Astrocyte of the cerebellum (primary cell): ENCODE measurements at regions of chr1 and their contacts with region 1.

Region 1: DNA sequence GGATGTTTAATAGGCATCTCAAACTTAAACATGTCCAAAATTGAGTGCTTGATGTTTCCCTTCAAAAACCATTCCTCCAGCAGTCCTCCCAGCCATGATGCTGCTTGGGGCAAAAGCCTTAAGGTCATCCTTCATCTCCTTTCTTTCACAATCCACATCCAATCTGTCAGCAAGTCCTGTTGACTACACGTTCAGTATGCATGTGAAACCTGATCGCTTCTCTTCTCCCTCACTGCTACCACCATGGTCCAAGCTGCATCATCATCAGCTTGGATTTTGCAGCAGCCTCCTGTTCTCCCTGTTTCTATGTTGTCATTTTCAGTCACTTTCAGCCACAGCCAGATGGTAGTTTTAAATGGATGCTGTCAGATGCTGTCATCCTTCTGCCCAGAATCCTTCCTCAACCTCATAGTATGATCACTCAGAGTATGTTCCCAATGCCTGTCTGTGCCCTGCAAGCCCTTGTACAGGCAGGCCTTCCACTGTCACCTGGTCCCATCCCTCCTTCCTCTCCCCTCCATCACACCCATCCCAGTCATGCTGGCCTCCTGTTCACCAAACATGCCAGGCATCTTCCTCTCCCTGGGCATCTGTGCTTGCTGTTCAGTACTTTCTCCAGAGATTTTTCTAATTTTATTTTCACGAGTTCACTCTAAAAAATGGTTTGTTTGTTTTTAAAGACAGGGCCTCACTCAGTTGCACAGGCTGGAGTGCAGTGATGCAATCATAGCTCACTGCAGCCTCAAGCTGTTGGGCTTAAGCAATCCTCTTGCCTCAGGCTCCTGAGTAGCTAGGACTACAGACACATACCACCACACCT is 66.0 kb downstream of the SYDE2 start:
- DNase-seq: no peak
- H3K4me3 ChIP-seq: no peak overlapping the region
- CTCF ChIP-seq: no peak

Region 2: DNA sequence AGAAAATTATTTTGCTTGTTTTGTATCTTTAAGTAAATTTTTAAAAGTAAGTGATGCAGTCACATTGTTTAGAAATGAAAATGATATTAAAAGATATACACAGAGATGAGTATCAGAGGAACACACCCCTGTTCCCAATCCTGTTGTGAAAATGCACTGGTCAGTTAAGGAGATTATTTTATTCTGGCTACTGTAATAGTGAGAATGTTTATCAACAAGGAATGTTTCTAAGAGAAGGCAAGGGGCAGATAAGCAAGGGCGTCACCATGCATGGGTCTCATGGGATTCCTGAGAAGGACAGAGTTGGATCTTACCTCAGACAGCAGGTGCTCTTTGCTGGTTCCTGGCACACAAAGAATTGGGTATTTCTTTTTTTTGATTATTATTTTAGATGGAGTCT is 102.8 kb after region 1 on chr1:
- in situ Hi-C with region 1: loop called (anchors 5 kb)
- DNase-seq: no peak
- H3K4me3 ChIP-seq: no peak overlapping the region
- CTCF ChIP-seq: no peak

Region 3: GRCh38 chr1:85494904-85495266 is 360.1 kb after region 1 on chr1:
- in situ Hi-C with region 1: no loop called
- DNase-seq: no peak
- H3K4me3 ChIP-seq: no peak overlapping the region
- CTCF ChIP-seq: peak; percentile 48